Activated B cell treated with CpG ODN at 0.5 μM for 24 hours (primary cell): ENCODE measurements at regions of chr3 and their contacts with region 1.

Region 1: GRCh38 chr3:13045904-13046568 is 27.2 kb downstream of the IQSEC1 start:
- DNase-seq: peak; percentile 61
- ATAC-seq: peak; percentile 90
- H3K4me3 Mint-ChIP-seq: peak overlapping the region; percentile 62
- H3K27ac Mint-ChIP-seq: peak overlapping the region; percentile 90
- H3K4me1 Mint-ChIP-seq: peaks cover 74% of the 10 kb centered on the region
- H3K27me3 Mint-ChIP-seq: no peaks in the 10 kb centered on the region
- CTCF ChIP-seq: no peak

Region 2: GRCh38 chr3:12994607-12995388 is 51.2 kb before region 1 on chr3:
- CTCF ChIA-PET with region 1: interaction called, 14 read pairs
- POLR2A ChIA-PET with region 1: interaction called, 11 read pairs
- intact Hi-C with region 1: loop called (anchors 2 kb)
- DNase-seq: peak; percentile 81
- ATAC-seq: peak; percentile 70
- H3K4me3 Mint-ChIP-seq: peak overlapping the region; percentile 89
- H3K27ac Mint-ChIP-seq: peak overlapping the region; percentile 88
- H3K4me1 Mint-ChIP-seq: peaks cover 85% of the 10 kb centered on the region
- H3K27me3 Mint-ChIP-seq: no peaks in the 10 kb centered on the region
- CTCF ChIP-seq: peak; percentile 93

Region 3: GRCh38 chr3:13012228-13012691 is 33.8 kb before region 1 on chr3:
- CTCF ChIA-PET with region 1: interaction called, 7 read pairs
- POLR2A ChIA-PET with region 1: interaction called, 170 read pairs
- intact Hi-C with region 1: loop called (anchors 1 kb)
- DNase-seq: no peak
- ATAC-seq: peak; percentile 36
- H3K4me3 Mint-ChIP-seq: peak overlapping the region; percentile 87
- H3K27ac Mint-ChIP-seq: peak overlapping the region; percentile 95
- H3K4me1 Mint-ChIP-seq: peaks cover 98% of the 10 kb centered on the region
- H3K27me3 Mint-ChIP-seq: no peaks in the 10 kb centered on the region
- CTCF ChIP-seq: no peak

Region 4: DNA sequence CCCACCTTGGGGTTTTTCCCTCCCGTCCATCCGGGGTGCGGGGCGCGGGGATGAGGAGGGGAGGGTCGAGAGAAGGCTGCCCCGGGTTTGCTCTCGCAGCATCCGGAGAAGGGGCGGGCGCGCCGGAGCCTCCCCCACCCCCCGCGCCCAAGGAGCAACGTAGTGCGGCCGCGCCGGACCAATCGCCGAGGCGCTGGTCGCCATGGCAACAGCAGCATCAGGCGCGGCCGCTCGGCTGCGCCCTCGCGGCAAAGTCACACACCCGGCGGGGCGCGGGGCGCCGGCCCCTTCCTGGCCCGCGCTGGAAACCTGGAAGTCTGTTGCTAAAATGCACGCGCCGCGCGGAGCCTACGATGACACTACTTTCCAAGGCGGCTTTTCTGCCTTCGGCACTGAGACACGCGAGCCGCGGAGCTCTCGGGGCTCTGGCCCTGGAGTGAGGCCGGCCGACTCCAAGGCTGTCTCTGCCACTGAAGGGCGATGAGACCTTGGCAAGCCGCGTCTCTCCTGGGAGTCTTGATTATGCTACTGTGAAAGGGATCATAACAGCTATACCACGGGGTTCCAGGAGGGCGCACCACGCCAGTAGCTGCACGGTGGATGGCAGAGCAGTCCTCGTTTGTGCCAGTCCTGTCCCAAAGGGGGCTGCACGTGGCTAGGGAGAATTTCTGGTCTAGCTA is 27.4 kb after region 1 on chr3 and contains the start of gene IQSEC1:
- CTCF ChIA-PET with region 1: interaction called, 3 read pairs
- POLR2A ChIA-PET with region 1: interaction called, 5 read pairs
- intact Hi-C with region 1: loop called (anchors 1 kb)
- DNase-seq: peak; percentile 76
- ATAC-seq: peak; percentile 66
- H3K4me3 Mint-ChIP-seq: peak within 1 kb of the TSS; percentile 86
- H3K27ac Mint-ChIP-seq: peak within 1 kb of the TSS; percentile 85
- H3K4me1 Mint-ChIP-seq: peaks cover 62% of the 10 kb centered on the region
- H3K27me3 Mint-ChIP-seq: no peaks in the 10 kb centered on the region
- CTCF ChIP-seq: no peak
- total RNA-seq, gene IQSEC1: 260 and 296 TPM in 2 replicates

Region 5: DNA sequence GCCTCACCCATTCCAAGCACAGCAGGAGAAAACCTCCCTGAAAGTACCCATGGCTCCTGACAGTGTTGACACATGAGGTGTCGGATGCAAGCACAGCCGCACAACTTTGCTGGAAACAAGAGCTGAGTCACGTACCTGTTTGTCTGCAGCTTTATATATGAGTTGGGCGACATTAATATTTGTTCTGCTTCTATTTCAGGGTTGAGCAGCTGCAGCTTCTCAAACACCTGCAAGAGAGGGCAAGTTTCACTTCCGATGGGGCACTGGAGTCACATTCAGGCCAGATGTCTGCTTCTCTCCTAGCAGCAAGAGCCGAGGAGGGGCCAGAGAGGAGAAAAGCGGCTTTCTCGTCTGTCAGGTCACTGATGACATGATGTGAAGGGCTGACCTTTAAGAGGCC is 286.1 kb after region 1 on chr3:
- CTCF ChIA-PET with region 1: no interaction called
- POLR2A ChIA-PET with region 1: no interaction called
- intact Hi-C with region 1: loop called (anchors 1 kb)
- DNase-seq: peak; percentile 48
- ATAC-seq: peak; percentile 91
- H3K4me3 Mint-ChIP-seq: peak overlapping the region; percentile 56
- H3K27ac Mint-ChIP-seq: peak overlapping the region; percentile 88
- H3K4me1 Mint-ChIP-seq: peaks cover 39% of the 10 kb centered on the region
- H3K27me3 Mint-ChIP-seq: no peaks in the 10 kb centered on the region
- CTCF ChIP-seq: no peak

Region 6: GRCh38 chr3:14144423-14145075 is 1098.5 kb after region 1 on chr3:
- CTCF ChIA-PET with region 1: no interaction called
- POLR2A ChIA-PET with region 1: no interaction called
- intact Hi-C with region 1: no loop called
- DNase-seq: peak; percentile 33
- ATAC-seq: peak; percentile 89
- H3K4me3 Mint-ChIP-seq: peak overlapping the region; percentile 57
- H3K27ac Mint-ChIP-seq: peak overlapping the region; percentile 96
- H3K4me1 Mint-ChIP-seq: peaks cover 20% of the 10 kb centered on the region
- H3K27me3 Mint-ChIP-seq: no peaks in the 10 kb centered on the region
- CTCF ChIP-seq: no peak